CD4-positive, alpha-beta T cell (primary cell): ENCODE measurements at regions of chr1 and their contacts with region 1.

Region 1: DNA sequence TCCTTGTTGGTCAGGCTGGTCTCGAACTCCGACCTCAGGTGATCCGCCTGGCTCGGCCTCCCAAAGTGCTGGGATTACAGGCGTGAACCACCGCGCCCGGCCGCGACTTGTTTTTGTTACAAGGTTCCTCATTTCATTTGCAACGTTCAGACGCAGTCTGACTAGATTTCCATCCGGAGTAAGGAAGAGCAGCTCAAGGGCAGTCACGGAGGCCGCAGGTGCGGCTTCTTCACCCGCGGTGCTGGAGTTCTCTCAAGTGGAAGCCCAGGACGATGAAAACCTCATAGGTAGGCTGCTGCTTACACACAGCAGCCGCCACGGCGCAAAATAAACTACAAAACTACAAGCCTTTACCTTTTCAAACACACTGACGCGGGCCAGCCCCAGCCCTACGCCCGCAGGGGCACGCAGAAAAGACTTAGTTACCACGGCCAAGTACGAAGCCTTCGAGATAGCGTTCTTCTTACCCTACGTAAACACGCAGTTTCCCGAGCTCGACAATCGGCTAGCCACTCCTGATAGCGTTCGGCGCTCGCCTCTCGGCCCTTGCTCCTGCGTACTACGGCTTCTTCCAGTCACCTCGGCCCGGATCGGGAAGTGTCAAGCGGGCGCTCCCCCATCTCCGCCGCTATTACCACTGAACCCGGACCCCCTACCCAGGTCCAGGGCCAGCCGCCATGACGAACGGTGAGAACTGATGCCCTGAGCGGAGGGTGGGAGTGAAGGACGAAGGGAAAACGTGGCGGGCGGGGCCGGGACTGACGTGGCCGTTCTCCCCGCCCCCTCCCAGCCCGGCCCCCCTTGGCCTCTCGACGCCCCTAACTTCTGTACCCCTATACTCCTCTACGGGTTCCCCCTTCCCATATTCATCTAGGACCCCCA is at the start of gene TMEM167B:
- DNase-seq: peak; percentile 76 to 94 (median 82)
- ATAC-seq: peak; percentile 86
- H3K4me3 ChIP-seq: peak within 1 kb of the TSS; percentile 98
- H3K4me3 Mint-ChIP-seq: peak within 1 kb of the TSS; percentile 97
- H3K27ac ChIP-seq: peak within 1 kb of the TSS; percentile 84 to 98
- H3K27ac Mint-ChIP-seq: peak within 1 kb of the TSS; percentile 94
- H3K4me1 ChIP-seq: peaks cover 27% of the 10 kb centered on the region
- H3K4me1 Mint-ChIP-seq: peaks cover 44% of the 10 kb centered on the region
- H3K27me3 ChIP-seq: no peaks in the 10 kb centered on the region
- H3K27me3 Mint-ChIP-seq: no peaks in the 10 kb centered on the region
- CTCF ChIP-seq: no peak
- total RNA-seq, gene TMEM167B: 70.2 to 71.0 TPM

Region 2: DNA sequence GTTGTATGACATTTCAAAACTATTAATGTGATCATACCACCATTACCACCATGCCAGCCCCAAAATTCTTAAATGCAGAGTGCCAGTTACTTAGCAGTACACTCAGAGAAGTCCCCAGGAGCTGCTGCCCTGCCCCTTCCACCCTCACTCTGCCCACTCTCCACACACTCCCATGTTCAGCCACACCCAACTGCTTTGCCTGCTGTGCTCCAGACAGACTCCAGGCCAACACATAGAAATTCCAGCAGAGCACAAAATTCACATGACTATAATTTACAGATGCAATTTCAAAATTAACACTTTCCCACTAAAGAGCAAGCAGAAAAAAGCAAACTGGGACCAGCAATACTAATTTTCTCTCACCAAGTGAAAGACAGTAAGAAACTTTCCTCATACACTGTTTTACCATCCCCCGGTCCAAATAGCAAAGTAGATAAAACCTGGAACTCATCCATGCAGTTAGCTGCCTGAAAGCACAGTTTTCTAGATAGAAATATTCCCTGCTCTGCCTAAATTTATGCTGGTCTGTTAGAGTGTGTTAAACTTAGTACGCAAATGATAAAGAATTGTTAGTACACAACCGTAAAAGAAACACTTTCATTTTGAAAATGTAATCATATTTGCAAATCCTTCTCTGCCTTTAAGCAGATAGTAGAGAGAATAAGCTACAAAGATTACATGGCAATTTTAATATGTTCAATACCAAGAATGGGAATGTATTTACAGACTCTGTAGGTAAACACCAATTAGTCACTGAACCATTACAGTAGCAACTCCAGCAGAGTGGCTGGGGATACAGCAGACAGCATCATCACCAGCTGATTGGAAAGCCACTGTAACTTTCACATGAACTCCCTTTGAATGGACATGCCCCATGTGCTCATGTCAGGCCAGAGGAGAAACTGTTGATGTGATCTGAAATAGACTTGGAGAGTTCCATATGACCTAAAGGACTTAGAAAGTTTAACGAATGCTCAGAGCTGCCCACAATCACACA is 1301.9 kb before region 1 on chr1:
- CTCF ChIA-PET with region 1: no interaction called
- POLR2A ChIA-PET with region 1: no interaction called
- intact Hi-C with region 1: no loop called
- DNase-seq: no peak
- ATAC-seq: no peak
- H3K4me3 ChIP-seq: no peak overlapping the region
- H3K4me3 Mint-ChIP-seq: peak overlapping the region; percentile 22
- H3K27ac ChIP-seq: no peak overlapping the region
- H3K27ac Mint-ChIP-seq: peak overlapping the region; percentile 88
- H3K4me1 ChIP-seq: peaks cover 25% of the 10 kb centered on the region
- H3K4me1 Mint-ChIP-seq: peaks cover 63% of the 10 kb centered on the region
- H3K27me3 ChIP-seq: no peaks in the 10 kb centered on the region
- H3K27me3 Mint-ChIP-seq: no peaks in the 10 kb centered on the region
- CTCF ChIP-seq: no peak

Region 3: DNA sequence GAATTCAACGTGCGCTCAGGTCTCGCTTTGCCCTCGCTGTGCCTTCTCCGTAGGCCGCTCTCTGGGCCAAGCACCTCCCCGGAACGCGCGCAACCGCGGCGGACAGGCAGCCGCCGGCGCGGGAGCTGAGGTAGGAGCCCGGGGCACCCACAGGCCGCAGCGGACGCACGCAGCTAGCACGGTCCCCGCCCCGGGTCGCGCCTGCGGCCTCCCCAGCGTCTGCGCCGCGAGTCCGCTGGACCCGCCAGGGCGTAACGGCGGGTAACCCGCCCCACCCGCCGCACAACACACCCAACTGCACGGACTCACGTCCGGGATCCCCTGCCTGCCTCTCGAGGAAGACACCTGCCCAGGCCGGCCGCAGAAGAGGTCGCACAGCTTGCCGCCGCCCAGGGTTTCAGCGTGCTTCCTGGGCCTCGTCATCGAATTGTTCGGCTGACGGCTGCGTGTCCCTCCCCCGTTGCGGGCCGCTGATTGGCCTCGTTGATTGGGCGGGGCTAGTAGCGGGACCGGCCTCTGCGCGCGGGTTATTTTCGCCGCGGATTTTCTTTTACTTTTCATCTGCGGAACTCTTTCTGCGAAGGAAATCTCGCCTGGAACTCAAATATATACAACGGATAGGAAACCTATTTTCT is 127.3 kb before region 1 on chr1 and contains the start of gene CLCC1:
- CTCF ChIA-PET with region 1: no interaction called
- POLR2A ChIA-PET with region 1: interaction called, 6 read pairs
- intact Hi-C with region 1: loop called in 1 of 2 experiments (anchors 5 kb)
- DNase-seq: peak; percentile 80 to 97 (median 88)
- ATAC-seq: peak; percentile 93
- H3K4me3 ChIP-seq: peak within 1 kb of the TSS; percentile 59
- H3K4me3 Mint-ChIP-seq: peak within 1 kb of the TSS; percentile 94
- H3K27ac ChIP-seq: peak within 1 kb of the TSS; percentile 64 to 79
- H3K27ac Mint-ChIP-seq: peak within 1 kb of the TSS; percentile 93
- H3K4me1 ChIP-seq: peaks cover 31% of the 10 kb centered on the region
- H3K4me1 Mint-ChIP-seq: peaks cover 47% of the 10 kb centered on the region
- H3K27me3 ChIP-seq: no peaks in the 10 kb centered on the region
- H3K27me3 Mint-ChIP-seq: no peaks in the 10 kb centered on the region
- CTCF ChIP-seq: no peak
- total RNA-seq, gene CLCC1: 8.6 to 9.1 TPM

Region 4: GRCh38 chr1:109075531-109076490 is 14.6 kb before region 1 on chr1 and contains the start of gene TAF13:
- CTCF ChIA-PET with region 1: interaction called, 6 read pairs
- POLR2A ChIA-PET with region 1: interaction called, 46 read pairs
- intact Hi-C with region 1: loop called (anchors 2 kb)
- DNase-seq: peak; percentile 69 to 93 (median 82)
- ATAC-seq: peak; percentile 94
- H3K4me3 ChIP-seq: peak within 1 kb of the TSS; percentile 88
- H3K4me3 Mint-ChIP-seq: peak within 1 kb of the TSS; percentile 95
- H3K27ac ChIP-seq: peak within 1 kb of the TSS; percentile 92 to 94
- H3K27ac Mint-ChIP-seq: peak within 1 kb of the TSS; percentile 99
- H3K4me1 ChIP-seq: peaks cover 12% of the 10 kb centered on the region
- H3K4me1 Mint-ChIP-seq: peaks cover 14% of the 10 kb centered on the region
- H3K27me3 ChIP-seq: no peaks in the 10 kb centered on the region
- H3K27me3 Mint-ChIP-seq: no peaks in the 10 kb centered on the region
- CTCF ChIP-seq: no peak
- total RNA-seq, gene TAF13: 25.9 to 26.5 TPM